Breast epithelium (tissue), 4 donors: ENCODE measurements at regions of chr9 and their contacts with region 1.

Region 1: DNA sequence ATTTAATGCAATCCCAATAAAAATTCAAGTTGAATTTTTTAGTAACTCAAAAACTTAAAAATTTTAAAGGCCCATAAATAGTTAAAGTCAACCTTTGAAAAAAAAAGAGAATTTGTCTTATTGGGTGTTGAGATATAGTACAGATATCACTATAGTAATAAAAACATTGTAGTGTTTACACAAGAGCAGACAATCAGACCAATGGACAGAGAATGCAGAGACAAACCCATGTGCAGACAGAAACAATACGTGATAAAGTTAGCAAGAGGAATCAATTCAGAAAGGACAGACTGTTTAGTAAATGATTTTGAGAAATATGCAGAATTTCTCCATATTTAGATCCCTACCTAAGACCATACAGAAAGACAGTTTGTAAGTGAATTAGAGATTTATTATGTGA is 33.9 kb downstream of the GOLGA1 start:
- DNase-seq: no peak
- H3K4me3 ChIP-seq: no peak overlapping the region
- H3K27ac ChIP-seq: no peak overlapping the region
- H3K4me1 ChIP-seq: no peaks in the 10 kb centered on the region
- H3K27me3 ChIP-seq: no peaks in the 10 kb centered on the region
- CTCF ChIP-seq: no peak
- POLR2A ChIP-seq: no peak

Region 2: DNA sequence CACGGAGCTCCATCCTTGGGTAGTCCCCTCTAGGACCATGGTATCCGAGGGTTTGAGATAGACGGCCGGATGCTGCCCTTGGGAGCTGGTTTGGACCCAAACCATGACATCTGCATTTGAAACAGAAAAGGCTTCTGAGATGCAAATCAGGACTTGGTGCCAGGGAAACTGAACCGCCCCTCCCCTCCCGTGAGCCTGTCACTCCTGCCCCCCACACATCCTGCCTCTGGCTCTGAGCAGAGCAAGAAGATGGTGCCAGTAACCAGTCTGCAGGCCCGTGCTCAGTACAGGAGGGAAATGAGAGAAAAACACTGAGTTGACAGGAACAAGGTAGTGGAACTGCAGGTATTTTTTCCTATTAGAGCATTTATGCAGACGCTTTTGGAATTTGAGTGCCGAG is 26.5 kb before region 1 on chr9:
- intact Hi-C with region 1: loop called (anchors 1 kb)
- DNase-seq: no peak
- H3K4me3 ChIP-seq: no peak overlapping the region
- H3K27ac ChIP-seq: no peak overlapping the region
- H3K4me1 ChIP-seq: no peaks in the 10 kb centered on the region
- H3K27me3 ChIP-seq: no peaks in the 10 kb centered on the region
- CTCF ChIP-seq: no peak
- POLR2A ChIP-seq: no peak

Region 3: GRCh38 chr9:124894741-124895170 is 12.2 kb before region 1 on chr9:
- intact Hi-C with region 1: loop called (anchors 1 kb)
- DNase-seq: no peak
- H3K4me3 ChIP-seq: no peak overlapping the region
- H3K27ac ChIP-seq: no peak overlapping the region
- H3K4me1 ChIP-seq: no peaks in the 10 kb centered on the region
- H3K27me3 ChIP-seq: no peaks in the 10 kb centered on the region
- CTCF ChIP-seq: peak in 1 of 3 donors; percentile 14
- POLR2A ChIP-seq: no peak